Tibial artery (tissue), 4 donors: ENCODE measurements at regions of chr17 and their contacts with region 1.

Region 1: GRCh38 chr17:36591434-36592315 is at the start of gene DHRS11:
- DNase-seq: peak; percentile 76 to 90
- H3K4me3 ChIP-seq: peak within 1 kb of the TSS; percentile 73 to 86
- H3K27ac ChIP-seq: peak within 1 kb of the TSS; percentile 53 to 65
- H3K4me1 ChIP-seq: peaks cover 0 to 25% (median 16%) of the 10 kb centered on the region in 4 donors
- H3K27me3 ChIP-seq: no peaks in the 10 kb centered on the region
- CTCF ChIP-seq: no peak

Region 2: GRCh38 chr17:34980681-34981537 is 1610.8 kb before region 1 on chr17:
- intact Hi-C with region 1: loop called (anchors 10 kb)
- DNase-seq: peak; percentile 75 to 84
- H3K4me3 ChIP-seq: peak overlapping the region; percentile 86 to 92
- H3K27ac ChIP-seq: peak overlapping the region; percentile 97 to 99
- H3K4me1 ChIP-seq: peaks cover 0 to 30% (median 18%) of the 10 kb centered on the region in 4 donors
- H3K27me3 ChIP-seq: no peaks in the 10 kb centered on the region
- CTCF ChIP-seq: peak; percentile 33 to 37

Region 3: GRCh38 chr17:36545465-36546417 is 45.9 kb before region 1 on chr17:
- intact Hi-C with region 1: loop called (anchors 5 kb)
- DNase-seq: peak; percentile 97 to 99
- H3K4me3 ChIP-seq: peak overlapping the region; percentile 82 to 97
- H3K27ac ChIP-seq: peak overlapping the region; percentile 98 to 99
- H3K4me1 ChIP-seq: peaks cover 0 to 57% (median 36%) of the 10 kb centered on the region in 4 donors
- H3K27me3 ChIP-seq: no peaks in the 10 kb centered on the region
- CTCF ChIP-seq: peak in 1 of 2 experiments; percentile 16

Region 4: DNA sequence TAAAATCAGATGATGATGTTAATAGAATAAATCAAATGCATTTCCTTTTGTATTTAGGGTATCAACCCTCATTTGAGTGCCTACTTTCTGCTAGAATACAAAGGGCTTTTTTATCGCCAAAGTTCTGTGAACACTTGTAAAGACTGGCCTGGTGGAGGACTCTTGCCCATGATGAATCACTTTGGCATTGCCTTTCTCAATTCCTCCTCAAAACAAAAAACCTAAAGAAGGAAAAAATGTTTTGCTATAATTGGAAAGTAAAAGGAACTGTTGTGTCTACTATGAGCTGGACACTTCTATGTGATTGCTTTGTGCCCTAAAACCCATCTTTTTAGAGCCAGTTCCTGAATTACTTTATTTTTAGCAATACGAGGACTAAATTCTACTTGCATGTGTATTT is 13.0 kb before region 1 on chr17:
- intact Hi-C with region 1: no loop called
- DNase-seq: no peak
- H3K4me3 ChIP-seq: no peak overlapping the region
- H3K27ac ChIP-seq: no peak overlapping the region
- H3K4me1 ChIP-seq: no peaks in the 10 kb centered on the region
- H3K27me3 ChIP-seq: no peaks in the 10 kb centered on the region
- CTCF ChIP-seq: no peak

Region 5: GRCh38 chr17:36705874-36706731 is 114.4 kb after region 1 on chr17:
- intact Hi-C with region 1: no loop called
- DNase-seq: no peak
- H3K4me3 ChIP-seq: no peak overlapping the region
- H3K27ac ChIP-seq: no peak overlapping the region
- H3K4me1 ChIP-seq: peaks cover 0 to 5% (median 0%) of the 10 kb centered on the region in 4 donors
- H3K27me3 ChIP-seq: peaks cover 0 to 54% of the 10 kb centered on the region in 2 donors
- CTCF ChIP-seq: no peak

Region 6: DNA sequence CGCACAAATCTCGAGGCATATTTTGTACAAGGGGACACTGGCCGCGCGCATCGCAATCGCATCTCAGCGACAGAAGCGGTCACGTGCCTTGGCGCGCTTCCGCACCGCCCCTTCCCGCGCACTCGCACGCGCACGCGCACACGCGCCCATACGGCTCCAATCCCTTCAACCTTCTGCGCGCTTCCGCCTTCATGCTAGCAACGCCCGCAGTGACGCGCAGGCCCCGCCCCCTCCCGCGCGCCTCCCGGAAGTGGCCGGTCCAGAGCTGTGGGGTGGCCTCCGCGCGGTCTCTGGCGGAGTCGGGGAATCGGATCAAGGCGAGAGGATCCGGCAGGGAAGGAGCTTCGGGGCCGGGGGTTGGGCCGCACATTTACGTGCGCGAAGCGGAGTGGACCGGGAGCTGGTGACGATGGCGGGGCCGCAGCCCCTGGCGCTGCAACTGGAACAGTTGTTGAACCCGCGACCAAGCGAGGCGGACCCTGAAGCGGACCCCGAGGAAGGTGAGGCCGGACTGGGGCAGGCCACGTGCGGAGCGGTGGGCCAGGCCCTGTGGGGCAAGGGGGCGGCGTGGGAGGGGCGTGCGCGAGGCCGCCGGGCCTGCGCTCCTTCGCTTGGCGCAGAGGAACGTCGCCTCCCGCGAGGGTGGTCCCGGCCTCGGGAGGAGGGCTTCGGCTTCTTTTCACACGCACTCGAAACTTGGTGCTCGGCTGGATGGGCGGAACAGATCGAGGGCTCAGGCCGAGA is 357.2 kb after region 1 on chr17 and contains the start of gene AATF:
- intact Hi-C with region 1: loop called (anchors 10 kb)
- DNase-seq: peak; percentile 96 to 98
- H3K4me3 ChIP-seq: peak within 1 kb of the TSS; percentile 91 to 95
- H3K27ac ChIP-seq: peak within 1 kb of the TSS; percentile 89 to 95
- H3K4me1 ChIP-seq: peaks cover 0 to 27% (median 18%) of the 10 kb centered on the region in 4 donors
- H3K27me3 ChIP-seq: peaks cover 0 to 37% of the 10 kb centered on the region in 2 donors
- CTCF ChIP-seq: no peak